OCI-LY7 (cell line): ENCODE measurements at regions of chr5 and their contacts with region 1.

Region 1: DNA sequence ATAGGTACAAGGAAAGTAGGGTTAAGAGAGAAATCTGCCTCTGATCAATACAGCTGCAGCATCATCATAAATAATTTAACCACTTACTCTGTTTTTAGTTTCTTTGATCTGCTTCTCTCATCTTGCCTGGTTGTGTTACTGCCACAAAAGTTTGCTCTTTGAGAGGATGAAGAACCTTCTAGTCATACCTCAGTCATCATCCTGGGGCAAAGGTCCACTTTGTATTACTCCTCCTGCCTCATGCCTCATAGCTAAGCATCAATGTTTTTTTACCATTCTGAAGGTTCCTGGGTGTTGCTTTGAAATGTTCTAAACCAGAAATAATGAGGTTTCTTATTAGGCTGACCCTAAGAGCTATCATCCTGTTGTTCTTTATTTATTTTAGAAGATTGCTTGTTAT is 17.1 kb upstream of the TRIM36 start:
- DNase-seq: no peak
- H3K4me3 ChIP-seq: no peak overlapping the region
- H3K27ac ChIP-seq: no peak overlapping the region
- H3K4me1 ChIP-seq: no peaks in the 10 kb centered on the region
- CTCF ChIP-seq: no peak

Region 2: DNA sequence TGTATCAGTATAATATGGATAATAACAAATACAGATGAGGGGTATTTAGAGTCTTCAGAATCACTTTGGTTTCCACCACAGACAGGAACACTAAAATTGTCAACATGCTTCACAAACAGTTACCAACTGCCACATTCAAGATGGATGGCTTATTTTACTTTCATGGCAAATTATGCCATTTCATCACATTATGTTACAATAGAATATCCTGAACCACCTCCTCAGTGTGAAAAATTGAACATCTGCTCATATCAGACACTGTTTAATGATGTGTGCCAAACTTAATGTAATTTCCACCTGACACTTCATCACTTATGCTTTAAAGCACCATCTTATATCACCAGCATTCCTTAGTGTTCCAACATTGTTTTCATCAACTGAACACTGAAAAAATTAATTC is 467.5 kb before region 1 on chr5:
- CTCF ChIA-PET with region 1: no interaction called
- POLR2A ChIA-PET with region 1: no interaction called
- intact Hi-C with region 1: no loop called
- DNase-seq: no peak
- H3K4me3 ChIP-seq: no peak overlapping the region
- H3K27ac ChIP-seq: no peak overlapping the region
- H3K4me1 ChIP-seq: no peaks in the 10 kb centered on the region
- CTCF ChIP-seq: no peak

Region 3: GRCh38 chr5:115214541-115214940 is 27.7 kb after region 1 on chr5:
- CTCF ChIA-PET with region 1: no interaction called
- POLR2A ChIA-PET with region 1: interaction called, 11 read pairs
- intact Hi-C with region 1: no loop called
- DNase-seq: no peak
- H3K4me3 ChIP-seq: no peak overlapping the region
- H3K27ac ChIP-seq: no peak overlapping the region
- H3K4me1 ChIP-seq: peaks cover 14% of the 10 kb centered on the region
- CTCF ChIP-seq: no peak

Region 4: DNA sequence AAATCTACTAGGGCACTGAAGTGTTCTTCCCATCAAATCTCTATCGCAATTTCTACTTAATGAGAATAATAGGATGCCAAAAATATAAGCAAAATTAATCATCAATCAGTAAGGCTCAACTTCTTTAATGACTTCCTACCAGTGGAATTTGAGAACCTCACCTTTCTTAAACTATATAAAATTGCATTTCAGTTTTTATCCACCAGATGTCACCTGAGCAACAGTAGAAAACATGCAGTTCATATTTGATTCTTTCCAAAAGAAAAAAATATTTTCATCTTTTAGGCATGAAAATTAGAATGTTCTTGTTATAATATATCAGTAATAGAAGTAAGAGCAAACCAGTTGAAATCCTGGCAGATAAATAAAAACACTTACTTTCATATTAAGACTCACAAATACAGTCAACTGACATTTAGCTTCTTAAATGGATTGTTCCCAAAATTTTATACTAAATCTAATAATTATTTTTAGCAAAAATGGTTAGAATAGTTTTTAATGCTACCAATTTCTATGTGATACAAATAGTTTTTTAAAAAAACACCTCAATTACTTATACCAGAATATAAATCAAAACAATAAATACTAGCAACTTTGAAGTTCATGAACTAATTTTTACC is 123.1 kb after region 1 on chr5:
- CTCF ChIA-PET with region 1: no interaction called
- POLR2A ChIA-PET with region 1: no interaction called
- intact Hi-C with region 1: no loop called
- DNase-seq: peak; percentile 50
- H3K4me3 ChIP-seq: no peak overlapping the region
- H3K27ac ChIP-seq: no peak overlapping the region
- H3K4me1 ChIP-seq: no peaks in the 10 kb centered on the region
- CTCF ChIP-seq: peak; percentile 87

Region 5: DNA sequence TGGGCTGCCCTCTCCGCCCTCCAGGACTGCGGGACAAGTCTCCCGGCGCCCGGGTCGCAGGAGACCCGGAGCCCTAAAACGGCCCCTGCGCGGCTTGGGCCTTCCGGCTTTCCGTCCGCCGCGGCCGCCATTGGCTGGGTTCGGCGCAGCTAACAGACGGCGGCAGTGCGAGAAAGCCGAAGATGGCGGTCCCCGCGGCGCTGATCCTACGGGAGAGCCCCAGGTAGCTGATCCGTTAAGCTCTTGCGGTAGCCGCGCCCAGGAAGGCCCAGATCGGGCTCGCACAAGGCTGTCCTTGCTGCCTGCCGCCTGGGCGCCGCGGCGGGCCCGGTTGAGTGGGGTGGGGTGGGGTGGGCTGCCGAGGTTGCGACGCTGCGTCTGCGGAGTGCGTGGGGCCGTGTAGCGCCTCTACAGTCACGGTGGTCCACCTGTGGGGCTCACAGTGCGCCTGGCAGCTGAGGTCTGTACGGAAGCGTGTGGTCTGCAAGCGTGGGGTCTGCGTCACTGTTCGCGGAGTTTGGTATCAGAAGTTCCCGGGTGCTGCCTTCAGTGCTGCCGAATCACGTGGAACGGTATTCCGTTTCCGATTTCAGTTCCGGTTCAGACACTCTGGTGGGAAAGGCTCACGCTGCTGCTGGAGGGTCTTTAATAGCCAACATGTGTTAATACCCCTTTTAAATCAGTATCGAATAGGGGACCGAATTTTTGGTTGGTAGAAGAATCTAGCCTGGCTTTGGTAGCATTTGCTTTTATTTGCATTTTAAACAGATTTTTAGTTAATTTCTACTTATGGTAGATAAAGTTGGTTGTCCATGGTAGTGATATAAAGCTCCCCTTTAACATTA is 898.3 kb after region 1 on chr5 and contains the start of gene COMMD10:
- CTCF ChIA-PET with region 1: no interaction called
- POLR2A ChIA-PET with region 1: no interaction called
- intact Hi-C with region 1: no loop called
- DNase-seq: peak; percentile 76
- H3K4me3 ChIP-seq: peak within 1 kb of the TSS; percentile 76
- H3K27ac ChIP-seq: no peak within 1 kb of the TSS
- H3K4me1 ChIP-seq: peaks cover 8% of the 10 kb centered on the region
- CTCF ChIP-seq: no peak
- total RNA-seq, gene COMMD10: 11.0 and 15.7 TPM in 2 replicates